ENCODE measurements at regions of chr21 and their contacts with region 1.

Region 1: DNA sequence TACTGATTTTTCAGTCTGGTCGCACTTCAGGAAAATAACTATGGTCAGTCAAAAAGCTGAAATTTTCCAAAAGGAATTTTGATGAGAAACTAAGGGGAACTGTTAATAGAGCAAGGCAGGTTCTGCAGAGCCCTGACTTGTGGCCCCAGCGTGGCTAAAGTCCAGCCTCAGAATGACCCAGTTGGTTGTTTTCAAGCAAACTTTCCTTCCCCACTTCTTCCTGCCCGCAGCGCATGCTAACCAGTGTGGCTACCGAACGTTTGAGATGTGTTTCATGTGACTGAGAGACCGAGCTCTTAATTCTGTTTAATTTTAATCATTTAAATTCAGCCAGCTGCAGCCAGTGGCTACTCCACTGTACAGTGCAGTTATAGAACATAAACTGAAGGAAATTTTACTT is 6.2 kb upstream of the IL10RB start:
- DNase-seq: no peak
- H3K4me3 ChIP-seq: no peak overlapping the region
- H3K27ac ChIP-seq: no peak overlapping the region
- H3K4me1 ChIP-seq: no peaks in the 10 kb centered on the region
- H3K27me3 ChIP-seq: no peaks in the 10 kb centered on the region
- CTCF ChIP-seq: no peak
- POLR2A ChIP-seq: no peak

Region 2: DNA sequence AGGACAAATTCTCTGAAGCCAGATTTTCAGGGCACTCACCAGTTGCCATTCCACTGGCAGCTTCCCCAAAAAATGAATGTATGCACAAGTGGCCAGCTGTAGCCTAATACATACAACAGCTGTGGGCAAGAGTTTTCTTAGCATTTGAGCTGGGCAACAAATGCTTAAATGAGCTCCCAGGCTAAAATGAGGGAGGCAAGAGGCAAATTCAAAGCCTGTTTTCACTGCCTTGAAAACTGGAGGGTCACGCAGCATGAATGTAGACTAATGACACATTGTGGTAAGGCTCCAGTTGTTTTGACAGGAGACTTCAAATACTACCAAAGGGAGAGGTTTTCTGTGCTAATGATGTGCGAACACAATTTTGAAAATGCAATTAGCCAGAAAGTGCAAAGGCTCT is 2004.1 kb before region 1 on chr21:
- intact Hi-C with region 1: no loop called
- DNase-seq: no peak
- H3K4me3 ChIP-seq: no peak overlapping the region
- H3K27ac ChIP-seq: no peak overlapping the region
- H3K4me1 ChIP-seq: no peaks in the 10 kb centered on the region
- H3K27me3 ChIP-seq: no peaks in the 10 kb centered on the region
- CTCF ChIP-seq: no peak
- POLR2A ChIP-seq: no peak

Region 3: DNA sequence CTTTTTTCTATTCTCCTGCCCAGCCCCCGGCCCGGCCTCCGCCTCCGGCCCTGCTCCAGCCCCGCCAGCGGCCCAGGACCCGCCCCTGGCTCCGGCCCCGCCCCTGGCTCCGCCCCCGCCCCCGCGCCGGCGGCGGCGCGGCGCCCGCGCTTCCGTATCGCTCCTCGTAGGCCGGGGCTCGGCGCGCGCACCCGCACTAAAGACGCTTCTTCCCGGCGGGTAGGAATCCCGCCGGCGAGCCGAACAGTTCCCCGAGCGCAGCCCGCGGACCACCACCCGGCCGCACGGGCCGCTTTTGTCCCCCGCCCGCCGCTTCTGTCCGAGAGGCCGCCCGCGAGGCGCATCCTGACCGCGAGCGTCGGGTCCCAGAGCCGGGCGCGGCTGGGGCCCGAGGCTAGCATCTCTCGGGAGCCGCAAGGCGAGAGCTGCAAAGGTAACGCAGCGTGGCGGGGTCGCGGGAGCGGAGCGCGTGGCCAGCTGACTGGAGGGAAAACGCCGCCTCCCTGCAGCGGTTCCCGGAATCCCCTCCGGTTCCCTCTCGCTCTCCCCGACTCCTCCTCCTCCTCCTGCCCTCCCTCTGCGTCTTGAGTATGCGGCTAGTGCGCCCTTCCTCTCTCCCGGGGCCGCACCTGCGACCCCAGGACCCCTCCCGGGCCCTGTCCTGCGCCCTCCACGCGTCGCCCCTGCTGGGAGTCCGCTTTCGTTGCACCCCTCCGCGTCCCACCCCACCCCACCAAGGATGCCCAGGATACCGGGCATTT is 30.0 kb before region 1 on chr21 and contains the start of gene IFNAR2:
- intact Hi-C with region 1: no loop called
- DNase-seq: peak in 1 of 2 donors; percentile 29
- H3K4me3 ChIP-seq: peak within 1 kb of the TSS; percentile 97 to 100 (median 98)
- H3K27ac ChIP-seq: peak within 1 kb of the TSS; percentile 90 to 98
- H3K4me1 ChIP-seq: peaks cover 0 to 6% of the 10 kb centered on the region in 2 donors
- H3K27me3 ChIP-seq: no peaks in the 10 kb centered on the region
- CTCF ChIP-seq: no peak
- POLR2A ChIP-seq: no peak
- total RNA-seq, gene IFNAR2: 10.4 to 16.5 (median 15.1) TPM

Region 4: GRCh38 chr21:33441489-33442477 is 181.8 kb after region 1 on chr21:
- intact Hi-C with region 1: loop called (anchors 10 kb)
- DNase-seq: peak in 1 of 2 donors; percentile 19
- H3K4me3 ChIP-seq: peak overlapping the region in 1 of 3 donors; percentile 15
- H3K27ac ChIP-seq: peak overlapping the region; percentile 26 to 55
- H3K4me1 ChIP-seq: no peaks in the 10 kb centered on the region
- H3K27me3 ChIP-seq: no peaks in the 10 kb centered on the region
- CTCF ChIP-seq: no peak
- POLR2A ChIP-seq: no peak